Head of caudate nucleus (tissue), 42 donors: ENCODE measurements at regions of chr14 and their contacts with region 1.

Region 1: DNA sequence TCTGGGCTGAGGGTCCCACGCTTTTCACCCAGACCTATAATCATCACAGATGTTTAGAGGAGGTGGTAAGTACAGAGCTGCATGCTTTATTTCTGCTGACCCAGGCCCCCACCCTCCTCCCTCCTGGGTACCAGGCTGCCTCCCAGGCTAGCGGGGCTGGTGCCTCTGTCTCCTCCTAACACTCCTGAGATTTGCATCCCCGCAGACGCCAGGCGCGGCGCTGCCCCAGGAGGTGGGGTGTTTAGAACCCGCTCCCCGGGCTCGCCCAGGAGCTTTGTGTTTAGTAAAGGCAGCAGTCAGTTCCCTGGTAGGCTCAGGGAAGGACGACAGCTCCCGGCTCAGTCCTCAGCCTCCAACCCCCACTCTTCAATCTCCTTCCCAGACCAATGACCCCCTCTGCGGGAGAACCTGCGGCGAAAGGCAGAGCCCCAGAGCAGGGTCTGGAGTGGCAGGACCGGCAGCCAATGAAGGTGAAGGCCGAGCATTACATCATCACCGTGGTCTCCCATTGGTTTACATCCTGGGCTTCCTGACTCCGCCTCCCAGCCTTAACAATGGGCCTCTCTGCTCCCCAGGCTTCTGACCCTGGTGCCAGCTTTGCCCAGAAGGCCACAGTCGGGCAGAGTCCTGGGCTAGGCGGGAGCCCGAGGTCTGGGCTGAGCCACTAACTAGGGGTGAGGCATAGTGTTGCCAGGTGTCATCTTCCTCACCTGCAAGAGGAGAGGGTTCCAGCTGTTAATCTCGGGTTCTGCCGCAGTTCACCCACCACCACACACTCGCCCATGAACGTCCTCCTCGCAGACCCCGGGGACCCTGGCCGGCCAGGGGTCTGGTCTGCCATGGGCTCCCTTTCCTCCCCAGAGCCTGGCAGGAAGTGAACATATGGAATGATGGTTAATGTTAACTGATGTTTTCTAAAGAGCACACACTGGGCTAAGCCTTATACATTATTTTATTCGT is 57.5 kb downstream of the CALM1 start:
- DNase-seq: peak; percentile 95 to 99 (median 98)

Region 2: GRCh38 chr14:89922031-89922907 is 532.1 kb before region 1 on chr14:
- intact Hi-C with region 1: no loop called
- DNase-seq: peak in 21 of 42 donors; percentile 11 to 81 (median 36)

Region 3: GRCh38 chr14:90556012-90556477 is 101.7 kb after region 1 on chr14:
- intact Hi-C with region 1: loop called (anchors 10 kb)
- DNase-seq: peak in 32 of 42 donors; percentile 32 to 83 (median 61)

Region 4: GRCh38 chr14:90795746-90796145 is 341.4 kb after region 1 on chr14:
- intact Hi-C with region 1: no loop called
- DNase-seq: peak in 1 of 42 donors; percentile 18